Left ventricle myocardium inferior (tissue), 1 donor: ENCODE measurements at regions of chr19 and their contacts with region 1.

Region 1: DNA sequence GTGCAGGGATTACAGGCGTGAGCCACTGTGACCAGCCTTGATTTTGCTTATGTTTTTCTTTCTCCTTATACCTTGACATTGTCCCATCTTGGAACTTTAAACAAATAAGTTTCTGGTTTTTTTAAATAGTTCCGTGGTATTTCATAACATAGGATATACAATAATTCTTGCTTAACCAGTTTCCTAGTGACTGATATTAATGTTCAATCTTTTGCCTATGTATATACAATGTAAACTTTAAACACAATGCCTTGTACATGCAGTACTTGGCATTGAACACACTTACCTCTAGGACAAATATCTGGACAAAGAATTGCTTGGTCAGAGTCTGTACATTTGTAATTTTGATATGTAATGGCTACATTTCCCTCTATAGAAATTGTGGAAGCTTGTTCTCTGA is 24.4 kb upstream of the SPACA4 start:
- DNase-seq: no peak
- H3K4me3 ChIP-seq: no peak overlapping the region
- H3K27ac ChIP-seq: no peak overlapping the region
- H3K4me1 ChIP-seq: peaks cover 7% of the 10 kb centered on the region
- H3K27me3 ChIP-seq: no peaks in the 10 kb centered on the region
- CTCF ChIP-seq: no peak

Region 2: DNA sequence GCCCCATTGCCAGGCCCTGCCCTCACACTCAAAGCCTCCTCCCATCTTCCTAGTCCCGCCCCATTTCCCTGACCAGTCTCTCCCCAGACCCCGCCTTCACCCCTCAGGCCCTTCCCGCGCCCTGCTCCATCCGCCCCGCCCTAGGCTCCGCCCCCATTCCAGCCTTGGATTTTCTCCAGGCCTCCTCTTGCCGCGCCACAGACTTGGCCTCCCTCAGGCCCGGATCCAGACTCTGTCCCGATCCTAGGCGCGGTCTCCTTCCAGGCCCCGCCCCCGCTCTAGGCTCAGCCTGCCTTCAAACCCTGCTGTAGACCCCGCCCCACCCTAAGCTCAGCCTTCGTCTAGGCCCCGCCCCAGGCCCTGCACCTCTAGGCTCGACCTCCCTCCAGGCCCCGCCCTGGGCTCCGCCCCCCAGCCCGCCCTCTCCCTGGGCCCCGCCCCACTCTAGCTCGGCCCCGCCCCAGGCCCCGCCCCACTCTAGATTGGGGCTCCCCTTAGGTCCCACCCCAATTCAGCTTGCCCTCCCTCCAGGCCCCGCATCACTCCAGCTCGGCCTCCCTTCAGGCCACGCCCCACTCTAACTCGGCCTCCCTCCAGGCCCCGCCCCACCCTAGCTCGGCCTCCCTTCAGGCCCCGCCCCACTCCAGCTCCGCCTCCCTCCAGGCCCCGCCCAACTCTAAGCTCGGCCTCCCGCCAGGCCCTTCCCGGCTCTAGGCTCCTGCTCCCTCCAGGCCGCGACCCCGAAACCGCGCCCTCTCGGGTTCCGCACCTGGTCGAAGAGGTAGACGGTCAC is 89.0 kb before region 1 on chr19:
- intact Hi-C with region 1: loop called (anchors 5 kb)
- DNase-seq: peak; percentile 94
- H3K4me3 ChIP-seq: peak overlapping the region; percentile 67
- H3K27ac ChIP-seq: peak overlapping the region; percentile 80
- H3K4me1 ChIP-seq: peaks cover 33% of the 10 kb centered on the region
- H3K27me3 ChIP-seq: peaks cover 18% of the 10 kb centered on the region
- CTCF ChIP-seq: no peak